ENCODE measurements at regions of chr19 and their contacts with region 1.

Region 1: DNA sequence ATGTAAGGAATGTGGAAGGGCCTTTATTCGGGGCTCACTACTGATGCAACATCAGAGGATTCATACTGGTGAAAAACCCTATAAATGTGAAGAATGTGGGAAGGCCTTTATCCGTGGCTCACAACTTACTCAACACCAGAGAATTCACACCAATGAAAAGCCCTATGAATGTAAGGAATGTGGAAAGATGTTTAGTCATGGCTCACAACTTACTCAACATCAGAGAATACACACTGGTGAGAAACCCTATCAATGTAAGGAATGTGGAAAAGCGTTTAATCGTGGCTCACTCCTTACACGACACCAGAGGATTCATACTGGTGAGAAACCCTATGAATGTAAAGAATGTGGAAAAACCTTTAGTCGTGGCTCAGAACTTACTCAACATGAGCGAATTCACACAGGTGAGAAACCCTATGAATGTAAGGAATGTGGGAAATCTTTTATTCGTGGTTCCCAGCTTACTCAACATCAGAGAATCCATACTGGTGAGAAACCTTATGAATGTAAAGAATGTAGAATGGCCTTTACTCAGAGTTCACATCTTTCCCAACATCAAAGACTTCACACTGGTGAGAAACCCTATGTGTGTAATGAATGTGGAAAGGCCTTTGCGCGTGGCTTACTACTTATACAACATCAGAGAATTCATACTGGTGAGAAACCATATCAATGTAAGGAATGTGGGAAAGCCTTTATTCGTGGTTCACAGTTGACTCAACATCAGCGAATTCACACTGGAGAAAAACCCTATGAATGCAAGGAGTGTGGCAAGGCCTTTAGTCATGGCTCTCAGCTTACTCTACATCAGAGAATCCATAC is 44.3 kb downstream of the ZNF585A start:
- DNase-seq: no peak
- ATAC-seq: no peak
- H3K4me3 ChIP-seq: no peak overlapping the region
- H3K4me3 Mint-ChIP-seq: no peak overlapping the region
- H3K27ac ChIP-seq: no peak overlapping the region
- H3K27ac Mint-ChIP-seq: no peak overlapping the region
- H3K4me1 ChIP-seq: no peaks in the 10 kb centered on the region
- H3K4me1 Mint-ChIP-seq: no peaks in the 10 kb centered on the region
- H3K27me3 ChIP-seq: no peaks in the 10 kb centered on the region
- H3K27me3 Mint-ChIP-seq: no peaks in the 10 kb centered on the region
- CTCF ChIP-seq: no peak

Region 2: DNA sequence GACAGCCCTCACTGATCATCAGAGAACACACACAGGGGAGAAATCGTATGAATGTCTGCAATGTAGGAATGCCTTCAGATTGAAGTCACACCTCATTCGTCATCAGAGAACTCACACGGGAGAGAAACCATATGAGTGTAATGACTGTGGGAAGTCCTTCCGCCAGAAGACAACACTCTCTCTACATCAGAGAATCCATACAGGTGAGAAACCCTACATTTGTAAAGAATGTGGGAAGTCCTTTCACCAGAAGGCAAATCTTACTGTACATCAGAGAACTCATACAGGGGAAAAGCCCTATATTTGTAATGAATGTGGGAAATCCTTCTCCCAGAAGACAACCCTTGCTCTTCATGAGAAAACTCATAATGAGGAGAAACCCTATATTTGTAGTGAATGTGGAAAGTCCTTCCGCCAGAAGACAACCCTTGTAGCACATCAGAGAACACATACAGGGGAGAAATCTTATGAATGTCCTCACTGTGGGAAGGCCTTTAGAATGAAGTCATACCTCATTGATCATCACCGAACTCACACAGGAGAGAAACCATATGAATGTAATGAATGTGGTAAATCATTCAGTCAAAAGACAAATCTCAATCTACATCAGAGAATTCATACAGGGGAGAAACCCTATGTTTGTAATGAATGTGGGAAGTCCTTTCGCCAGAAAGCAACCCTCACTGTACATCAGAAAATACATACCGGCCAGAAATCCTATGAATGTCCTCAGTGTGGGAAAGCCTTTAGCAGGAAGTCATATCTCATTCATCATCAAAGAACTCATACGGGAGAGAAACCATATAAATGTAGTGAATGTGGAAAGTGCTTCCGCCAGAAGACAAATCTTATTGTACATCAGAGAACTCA is 408.3 kb before region 1 on chr19:
- intact Hi-C with region 1: loop called (anchors 10 kb)
- DNase-seq: no peak
- ATAC-seq: no peak
- H3K4me3 ChIP-seq: no peak overlapping the region
- H3K4me3 Mint-ChIP-seq: peak overlapping the region; percentile 13
- H3K27ac ChIP-seq: no peak overlapping the region
- H3K27ac Mint-ChIP-seq: no peak overlapping the region
- H3K4me1 ChIP-seq: no peaks in the 10 kb centered on the region
- H3K4me1 Mint-ChIP-seq: no peaks in the 10 kb centered on the region
- H3K27me3 ChIP-seq: no peaks in the 10 kb centered on the region
- H3K27me3 Mint-ChIP-seq: no peaks in the 10 kb centered on the region
- CTCF ChIP-seq: no peak

Measured in natural killer cell (primary cell).